Common myeloid progenitor, CD34-positive (primary cell): ENCODE measurements at regions of chr17 and their contacts with region 1.

Region 1: DNA sequence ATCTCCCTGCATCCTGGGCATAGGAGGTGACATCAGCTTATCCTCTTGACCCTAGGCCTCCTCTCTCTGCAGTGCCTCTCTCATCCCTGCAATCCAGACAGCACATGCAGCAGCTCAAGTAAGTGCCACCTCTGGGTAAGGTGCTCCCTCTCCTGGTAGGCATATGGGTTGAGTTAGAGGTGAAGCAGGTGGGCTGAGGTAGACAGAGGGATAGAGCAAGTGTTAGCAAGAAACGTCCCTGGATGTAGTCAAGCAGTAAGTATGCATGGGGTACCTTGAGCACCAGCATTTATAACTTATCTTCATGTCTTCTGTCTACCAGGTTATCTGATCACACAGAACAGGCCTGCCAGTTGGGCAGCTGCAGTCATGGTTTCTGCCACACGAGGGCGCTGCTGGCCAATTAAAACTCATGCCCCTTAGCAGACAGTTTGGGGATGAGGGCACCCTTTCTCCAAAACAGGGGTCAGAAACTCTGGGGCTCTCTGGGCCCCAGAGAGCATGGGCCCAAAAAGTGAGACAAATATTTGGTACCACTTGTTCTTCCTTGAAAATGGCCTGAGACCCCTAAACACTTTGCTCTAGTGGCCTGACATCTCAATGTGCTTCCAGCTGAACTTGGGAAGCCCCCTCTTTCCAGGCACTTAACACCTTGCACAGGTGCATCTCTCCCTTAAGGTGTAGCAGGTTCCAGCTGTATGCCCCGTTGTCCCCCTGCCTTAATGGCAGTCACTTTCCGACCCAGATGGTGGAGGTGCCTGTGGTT is 59.8 kb downstream of the NEUROD2 start:
- DNase-seq: peak; percentile 55 to 69 (median 60)
- H3K4me3 ChIP-seq: no peak overlapping the region
- H3K27ac ChIP-seq: no peak overlapping the region
- H3K4me1 ChIP-seq: no peaks in the 10 kb centered on the region
- H3K27me3 ChIP-seq: peaks cover 0 to 3% (median 0%) of the 10 kb centered on the region in 5 experiments

Region 2: GRCh38 chr17:39527220-39527813 is 20.6 kb before region 1 on chr17:
- CTCF ChIA-PET with region 1: interaction called, 18 read pairs
- POLR2A ChIA-PET with region 1: no interaction called
- DNase-seq: peak; percentile 43 to 64 (median 59)
- H3K4me3 ChIP-seq: no peak overlapping the region
- H3K27ac ChIP-seq: no peak overlapping the region
- H3K4me1 ChIP-seq: peaks cover 2 to 26% (median 9%) of the 10 kb centered on the region in 4 experiments
- H3K27me3 ChIP-seq: no peaks in the 10 kb centered on the region

Region 3: DNA sequence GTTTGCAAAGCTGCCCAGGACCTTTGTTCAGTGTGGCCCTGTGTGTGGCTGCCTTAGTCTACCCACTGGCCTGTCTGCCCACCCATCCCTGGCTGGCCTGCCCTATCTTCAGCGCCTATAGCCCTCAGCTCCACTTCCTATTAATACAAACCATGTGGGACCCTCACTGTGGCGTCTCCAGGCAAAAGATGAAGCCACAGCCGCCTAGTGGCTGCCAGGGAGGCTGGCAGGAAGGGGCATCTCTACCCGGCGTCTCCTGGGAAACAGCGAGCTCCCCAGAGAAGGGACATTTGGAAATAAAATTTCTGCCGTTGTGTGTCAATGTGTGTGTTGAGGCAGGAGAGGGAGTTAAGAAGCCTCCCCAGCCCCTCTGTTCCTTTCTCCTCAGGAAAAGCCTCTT is 28.3 kb after region 1 on chr17:
- CTCF ChIA-PET with region 1: interaction called, 26 read pairs
- POLR2A ChIA-PET with region 1: no interaction called
- DNase-seq: peak; percentile 31 to 56 (median 54)
- H3K4me3 ChIP-seq: no peak overlapping the region
- H3K27ac ChIP-seq: no peak overlapping the region
- H3K4me1 ChIP-seq: peaks cover 0 to 9% (median 4%) of the 10 kb centered on the region in 4 experiments
- H3K27me3 ChIP-seq: peaks cover 0 to 17% (median 3%) of the 10 kb centered on the region in 5 experiments